AG04449 (cell line): ENCODE measurements at regions of chr15 and their contacts with region 1.

Region 1: GRCh38 chr15:98518823-98519561 is 129.3 kb upstream of the IGF1R start:
- DNase-seq: no peak
- H3K4me3 ChIP-seq: no peak overlapping the region
- CTCF ChIP-seq: peak; percentile 59

Region 2: GRCh38 chr15:98503970-98504369 is 15.0 kb before region 1 on chr15:
- CTCF ChIA-PET with region 1: interaction called, 14 read pairs
- POLR2A ChIA-PET with region 1: no interaction called
- DNase-seq: no peak
- H3K4me3 ChIP-seq: no peak overlapping the region
- CTCF ChIP-seq: no peak

Region 3: GRCh38 chr15:98658831-98659699 is 140.1 kb after region 1 on chr15:
- CTCF ChIA-PET with region 1: interaction called, 57 read pairs
- POLR2A ChIA-PET with region 1: no interaction called
- DNase-seq: no peak
- H3K4me3 ChIP-seq: no peak overlapping the region
- CTCF ChIP-seq: peak; percentile 70

Region 4: DNA sequence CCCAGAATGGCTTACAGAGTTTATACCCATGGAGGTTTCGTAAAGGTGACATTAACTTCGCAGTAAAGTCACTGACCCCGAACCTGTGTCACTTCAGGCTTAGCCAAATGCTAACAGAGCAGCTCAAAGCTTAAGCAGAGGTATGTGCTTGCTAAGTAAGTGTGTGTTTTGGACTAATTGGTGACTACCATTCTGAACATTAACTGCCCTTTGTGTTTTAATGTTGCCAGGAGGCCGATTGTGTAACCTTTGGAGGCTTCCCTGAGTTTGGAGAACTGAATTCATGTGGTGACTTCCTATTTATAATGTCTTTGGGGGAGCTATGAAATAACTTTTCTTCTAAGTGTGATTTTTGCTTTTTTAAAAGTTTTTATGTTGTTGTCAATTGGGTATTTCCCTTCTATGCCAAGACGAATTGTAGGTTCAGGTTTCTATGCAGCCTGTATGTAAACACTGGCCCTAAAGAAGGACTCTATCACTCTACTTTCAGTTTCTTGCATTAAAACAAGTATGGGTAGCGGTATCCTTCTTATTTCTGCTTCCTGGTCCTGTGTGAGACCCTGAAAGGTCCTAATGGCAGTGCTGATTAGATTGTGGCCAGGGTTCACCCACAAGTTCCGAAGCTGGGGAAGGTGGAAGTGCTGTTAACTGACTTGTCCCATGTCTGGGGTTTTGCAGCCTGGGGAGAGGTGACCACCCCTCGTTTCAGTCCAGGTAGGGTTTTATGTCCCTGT is 215.6 kb after region 1 on chr15:
- CTCF ChIA-PET with region 1: no interaction called
- POLR2A ChIA-PET with region 1: no interaction called
- DNase-seq: no peak
- H3K4me3 ChIP-seq: no peak overlapping the region
- CTCF ChIP-seq: no peak

Region 5: DNA sequence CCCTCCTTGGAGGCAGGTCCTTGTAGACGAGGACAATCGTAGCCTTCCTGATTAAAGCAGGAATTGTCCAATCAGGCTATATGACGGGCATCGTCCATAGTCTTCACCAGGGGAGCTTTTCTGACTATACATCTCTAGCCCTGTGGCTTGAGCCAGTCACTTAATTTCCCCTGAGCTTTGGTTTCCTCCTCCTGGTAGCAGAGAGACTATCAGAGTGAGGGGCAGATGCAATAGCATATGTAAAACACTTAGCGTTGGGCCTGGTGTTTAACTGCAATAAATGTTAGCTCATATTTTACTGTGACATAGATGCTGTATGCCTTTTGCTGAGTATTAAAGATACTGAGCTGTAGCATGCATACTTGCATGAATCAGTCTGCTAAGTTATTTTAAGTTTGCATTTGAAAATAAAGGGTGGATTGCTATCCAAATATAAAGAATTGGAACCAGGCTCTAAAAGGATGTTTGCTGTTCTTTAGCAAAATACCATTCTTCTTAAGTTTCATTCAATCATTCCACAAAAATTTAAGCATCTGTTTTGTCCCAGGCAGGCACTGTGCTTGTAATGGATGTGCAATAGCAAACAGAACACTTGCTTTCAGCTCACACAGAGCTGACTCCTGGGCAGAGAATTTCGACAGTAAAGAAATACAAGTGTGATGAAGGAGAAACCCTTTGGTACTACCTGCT is 337.4 kb after region 1 on chr15:
- CTCF ChIA-PET with region 1: interaction called, 11 read pairs
- POLR2A ChIA-PET with region 1: no interaction called
- DNase-seq: peak; percentile 92
- H3K4me3 ChIP-seq: no peak overlapping the region
- CTCF ChIP-seq: no peak

Region 6: GRCh38 chr15:98966091-98966787 is 447.2 kb after region 1 on chr15:
- CTCF ChIA-PET with region 1: interaction called, 11 read pairs
- POLR2A ChIA-PET with region 1: no interaction called
- DNase-seq: no peak
- H3K4me3 ChIP-seq: no peak overlapping the region
- CTCF ChIP-seq: no peak

Region 7: GRCh38 chr15:99104788-99105513 is 586.0 kb after region 1 on chr15 and contains the start of gene SYNM:
- CTCF ChIA-PET with region 1: interaction called, 36 read pairs
- POLR2A ChIA-PET with region 1: no interaction called
- DNase-seq: no peak
- H3K4me3 ChIP-seq: peak within 1 kb of the TSS; percentile 64
- CTCF ChIP-seq: peak; percentile 67